ENCODE measurements at regions of chr12 and their contacts with region 1.

Region 1: DNA sequence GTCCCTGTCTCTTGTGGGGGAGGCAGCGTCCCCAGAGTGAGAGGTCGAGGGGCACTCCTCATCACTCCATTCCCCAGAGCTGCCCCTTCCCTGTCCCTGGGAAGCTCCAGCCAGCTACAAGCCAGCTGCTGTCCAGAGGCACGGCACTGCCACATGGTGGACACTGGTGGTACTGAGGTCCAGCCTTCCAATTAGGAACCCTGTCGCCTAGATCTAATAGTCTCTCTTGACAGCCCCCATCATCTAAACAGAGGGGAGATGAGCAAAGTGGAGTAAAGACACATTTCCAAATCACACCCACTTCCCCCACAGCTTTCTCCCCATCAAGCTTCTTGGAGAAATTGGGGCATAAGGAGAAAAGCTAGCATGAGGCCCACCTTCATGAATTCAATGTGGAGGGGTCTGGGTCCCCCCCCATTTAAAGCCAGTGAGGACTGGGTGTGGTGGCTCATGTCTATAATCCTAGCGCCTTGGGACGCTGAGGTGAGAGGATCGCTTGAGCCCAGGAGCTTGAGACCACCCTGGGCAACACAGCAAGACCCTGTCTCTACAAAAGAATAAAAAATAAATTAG is 2.1 kb upstream of the INHBE start:
- DNase-seq: peak in 1 of 2 donors; percentile 91
- H3K4me3 ChIP-seq: peak overlapping the region in 1 of 2 donors; percentile 47
- H3K27ac ChIP-seq: peak overlapping the region; percentile 85 to 97
- H3K4me1 ChIP-seq: peaks cover 0 to 18% of the 10 kb centered on the region in 2 donors
- H3K27me3 ChIP-seq: no peaks in the 10 kb centered on the region
- CTCF ChIP-seq: peak; percentile 92 to 95 (median 93)

Region 2: DNA sequence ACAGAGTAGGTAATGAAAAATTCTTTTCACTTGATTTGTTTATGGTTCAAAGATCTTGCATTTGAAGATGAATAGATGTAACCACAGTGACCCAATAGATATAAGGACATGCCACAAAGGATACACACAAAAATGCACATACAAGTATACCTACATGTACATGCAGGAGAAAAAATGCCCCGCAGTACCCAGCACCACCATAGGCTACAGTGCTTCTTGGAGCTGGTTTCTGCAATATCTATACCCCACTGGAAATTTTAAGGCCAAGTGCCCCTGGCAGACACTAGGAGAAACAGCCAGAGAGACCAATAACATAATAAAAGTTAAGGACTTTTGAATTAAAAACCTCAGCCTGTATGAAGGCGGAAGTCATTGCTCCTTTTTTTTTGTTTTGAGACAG is 189.9 kb before region 1 on chr12:
- intact Hi-C with region 1: loop called (anchors 1 kb)
- DNase-seq: no peak
- H3K4me3 ChIP-seq: no peak overlapping the region
- H3K27ac ChIP-seq: no peak overlapping the region
- H3K4me1 ChIP-seq: no peaks in the 10 kb centered on the region
- H3K27me3 ChIP-seq: no peaks in the 10 kb centered on the region
- CTCF ChIP-seq: no peak

Region 3: DNA sequence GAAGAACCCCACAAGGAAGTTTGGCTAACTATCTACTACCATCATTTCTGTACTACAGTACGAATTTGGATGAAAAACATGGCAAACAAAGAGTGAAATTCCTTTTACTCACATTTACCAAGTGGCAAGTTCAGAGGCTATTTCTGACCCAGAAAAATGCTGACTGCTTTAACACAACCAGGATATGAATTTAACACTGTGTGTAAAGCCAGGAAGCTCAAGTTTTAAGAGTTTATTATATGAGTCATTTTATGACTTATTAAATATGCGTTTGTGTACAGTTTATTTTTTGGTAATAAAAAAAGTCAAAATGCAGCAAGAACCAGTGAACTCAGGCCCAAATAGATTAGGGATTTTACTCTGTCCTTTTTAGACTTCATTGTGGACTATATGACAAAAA is 143.6 kb before region 1 on chr12:
- intact Hi-C with region 1: loop called (anchors 1 kb)
- DNase-seq: no peak
- H3K4me3 ChIP-seq: no peak overlapping the region
- H3K27ac ChIP-seq: peak overlapping the region; percentile 54 to 61
- H3K4me1 ChIP-seq: peaks cover 4 to 13% of the 10 kb centered on the region in 2 donors
- H3K27me3 ChIP-seq: no peaks in the 10 kb centered on the region
- CTCF ChIP-seq: no peak

Region 4: DNA sequence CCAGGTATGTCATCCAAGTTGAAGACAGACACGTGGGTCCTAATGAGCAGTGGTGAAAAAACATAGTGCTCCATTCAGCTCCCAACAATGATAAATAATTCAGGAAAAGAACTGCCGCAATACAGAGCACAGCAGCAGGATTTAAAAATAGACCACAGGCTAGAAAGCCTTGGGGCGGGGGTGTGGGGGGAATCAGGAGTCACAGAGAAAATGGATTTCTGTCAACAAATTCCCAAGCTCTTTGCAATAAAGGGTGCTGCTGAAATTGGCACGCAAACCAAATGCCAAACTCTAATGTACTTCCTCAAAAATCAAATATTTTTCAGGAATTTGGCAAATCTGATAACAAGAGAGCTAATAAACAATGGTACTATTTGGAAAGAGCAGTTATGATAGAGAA is 80.8 kb before region 1 on chr12:
- intact Hi-C with region 1: loop called (anchors 5 kb)
- DNase-seq: peak in 1 of 2 donors; percentile 69
- H3K4me3 ChIP-seq: no peak overlapping the region
- H3K27ac ChIP-seq: peak overlapping the region; percentile 68 to 70
- H3K4me1 ChIP-seq: peaks cover 3 to 18% of the 10 kb centered on the region in 2 donors
- H3K27me3 ChIP-seq: no peaks in the 10 kb centered on the region
- CTCF ChIP-seq: no peak

Region 5: DNA sequence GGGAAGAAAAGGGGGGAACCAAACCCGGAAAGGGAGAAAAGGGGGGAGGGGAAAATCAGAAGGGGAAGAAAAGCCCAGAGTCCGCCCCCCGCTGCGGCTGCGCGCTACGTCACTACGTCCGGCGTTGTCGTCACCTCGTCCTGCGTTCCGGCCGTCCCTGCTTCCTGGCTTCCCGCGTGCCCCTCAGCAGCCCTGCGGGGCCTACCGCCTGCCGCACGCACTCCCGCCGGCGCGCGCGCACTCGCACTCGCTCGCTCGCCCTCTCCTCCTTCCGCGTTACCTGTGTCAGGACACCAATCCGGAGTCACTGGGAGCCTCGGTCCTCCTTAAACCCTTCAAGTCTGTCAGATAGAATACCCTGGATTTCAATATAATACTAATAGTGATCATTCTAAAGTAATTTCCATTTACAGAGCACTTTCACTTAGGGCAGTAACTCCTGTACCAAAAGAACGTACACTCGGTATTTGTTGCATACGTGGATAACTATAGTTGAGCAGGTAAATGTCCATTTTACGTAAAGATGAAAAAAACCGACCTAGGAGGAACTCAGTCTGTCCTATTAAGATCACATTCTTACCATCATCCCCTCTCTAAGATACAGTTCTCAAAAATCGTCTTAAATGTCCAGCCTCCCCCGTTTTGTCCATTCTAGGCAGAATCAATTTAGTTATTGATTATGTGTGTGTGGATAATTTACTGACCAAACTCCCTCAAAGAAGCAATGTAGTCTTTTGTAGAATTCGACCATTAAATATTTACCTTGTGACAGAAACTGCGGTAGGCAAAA is 21.9 kb before region 1 on chr12 and contains the start of gene R3HDM2:
- intact Hi-C with region 1: loop called (anchors 1 kb)
- DNase-seq: peak; percentile 80 to 97
- H3K4me3 ChIP-seq: peak within 1 kb of the TSS; percentile 90 to 98
- H3K27ac ChIP-seq: peak within 1 kb of the TSS; percentile 94 to 100
- H3K4me1 ChIP-seq: peaks cover 6 to 7% of the 10 kb centered on the region in 2 donors
- H3K27me3 ChIP-seq: no peaks in the 10 kb centered on the region
- CTCF ChIP-seq: no peak
- total RNA-seq, gene R3HDM2: 49.5 TPM